A549 (cell line): ENCODE measurements at regions of chr6 and their contacts with region 1.

Region 1: DNA sequence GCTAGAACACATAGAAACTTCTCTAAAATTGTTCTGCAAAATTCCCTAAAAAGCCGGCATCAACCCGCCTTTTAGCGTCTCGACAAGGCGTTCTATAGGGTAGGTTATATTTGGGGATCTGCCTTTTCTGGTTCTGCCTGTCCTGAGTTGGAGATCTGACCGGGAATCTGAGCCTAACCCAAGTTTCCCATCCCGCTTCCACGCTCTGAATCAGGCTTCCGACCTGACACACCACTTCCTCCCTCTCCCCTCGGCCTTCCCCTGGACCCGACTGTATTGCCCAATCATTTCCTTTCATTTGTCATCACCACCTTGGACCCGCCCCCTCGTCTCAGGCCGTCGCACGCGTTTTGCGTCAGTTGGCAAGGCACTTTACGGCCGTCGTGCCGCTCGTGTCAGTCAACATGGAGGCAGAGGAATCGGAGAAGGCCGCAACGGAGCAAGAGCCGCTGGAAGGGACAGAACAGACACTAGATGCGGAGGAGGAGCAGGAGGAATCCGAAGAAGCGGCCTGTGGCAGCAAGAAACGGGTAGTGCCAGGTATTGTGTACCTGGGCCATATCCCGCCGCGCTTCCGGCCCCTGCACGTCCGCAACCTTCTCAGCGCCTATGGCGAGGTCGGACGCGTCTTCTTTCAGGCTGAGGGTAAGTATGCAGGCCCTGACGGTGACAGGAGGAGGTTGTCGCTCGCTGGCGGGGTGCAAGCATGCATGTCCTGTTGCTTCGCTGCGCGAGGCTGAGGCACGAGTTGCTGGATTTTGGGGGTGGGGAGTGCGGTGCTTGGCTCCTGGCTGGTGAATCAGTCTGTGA is at the start of gene ABT1:
- DNase-seq: peak; percentile 88 to 98
- ATAC-seq: peak; percentile 73 to 78
- H3K4me3 ChIP-seq: peak within 1 kb of the TSS; percentile 77
- H3K27ac ChIP-seq: peak within 1 kb of the TSS; percentile 86 to 95
- H3K4me1 ChIP-seq: peaks cover 4% of the 10 kb centered on the region; the same call in 1 of the 3 replicates
- CTCF ChIP-seq: no peak
- EP300 ChIP-seq: no peak
- POLR2A ChIP-seq: peak; percentile 65
- RAD21 ChIP-seq: no peak
- polyA plus RNA-seq, gene ABT1: 10.6 and 11.9 TPM in 2 replicates

Region 2: GRCh38 chr6:25934735-25935306 is 662.0 kb before region 1 on chr6:
- CTCF ChIA-PET with region 1: no interaction called
- POLR2A ChIA-PET with region 1: no interaction called
- DNase-seq: no peak
- ATAC-seq: no peak
- H3K4me3 ChIP-seq: no peak overlapping the region
- H3K27ac ChIP-seq: no peak overlapping the region
- H3K4me1 ChIP-seq: 0 out of 3 replicates have a peak, but pooled peaks cover under 1% of the 10 kb centered on the region
- CTCF ChIP-seq: no peak
- EP300 ChIP-seq: no peak
- POLR2A ChIP-seq: no peak
- RAD21 ChIP-seq: no peak

Region 3: DNA sequence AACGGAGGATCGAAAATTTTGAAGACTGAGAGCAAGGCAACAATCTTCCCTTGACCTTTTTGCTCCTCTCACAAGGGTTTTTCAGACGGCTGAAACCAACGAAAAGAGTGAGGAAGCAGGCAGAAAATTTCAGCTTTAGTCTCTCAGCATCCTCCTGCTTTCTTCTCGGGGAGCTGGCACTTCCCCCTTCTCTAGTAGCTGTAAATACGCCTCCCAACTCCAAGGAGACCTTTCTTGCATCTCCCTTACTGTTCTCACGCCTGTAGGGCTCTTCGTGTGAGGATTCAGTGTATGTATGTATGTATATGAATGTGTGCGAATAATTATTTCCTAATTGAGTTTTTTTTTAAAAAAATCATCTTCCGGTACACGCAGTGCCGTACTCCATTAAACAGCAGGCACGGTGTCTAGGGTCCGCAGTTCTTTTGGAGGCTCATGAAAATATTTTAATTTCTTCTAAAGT is 424.3 kb before region 1 on chr6:
- CTCF ChIA-PET with region 1: interaction called, 10 read pairs
- POLR2A ChIA-PET with region 1: no interaction called
- DNase-seq: no peak
- ATAC-seq: peak; percentile 61 to 64; a peak in 4 of 6 replicates
- H3K4me3 ChIP-seq: peak overlapping the region; percentile 57
- H3K27ac ChIP-seq: peak overlapping the region; percentile 85 to 89
- H3K4me1 ChIP-seq: peaks cover 16% of the 10 kb centered on the region; the same call in 2 of the 3 replicates
- CTCF ChIP-seq: no peak
- EP300 ChIP-seq: no peak
- POLR2A ChIP-seq: no peak
- RAD21 ChIP-seq: no peak

Region 4: GRCh38 chr6:26329763-26330511 is 266.8 kb before region 1 on chr6:
- CTCF ChIA-PET with region 1: interaction called, 19 read pairs
- POLR2A ChIA-PET with region 1: interaction called, 3 read pairs
- DNase-seq: peak in 1 of 2 experiments; percentile 78
- ATAC-seq: peak; percentile 27 to 57; a peak in 4 of 6 replicates
- H3K4me3 ChIP-seq: peak overlapping the region; percentile 69
- H3K27ac ChIP-seq: no peak overlapping the region
- H3K4me1 ChIP-seq: peaks cover 7% of the 10 kb centered on the region; the same call in 1 of the 3 replicates
- CTCF ChIP-seq: no peak
- EP300 ChIP-seq: no peak
- POLR2A ChIP-seq: no peak
- RAD21 ChIP-seq: no peak

Region 5: DNA sequence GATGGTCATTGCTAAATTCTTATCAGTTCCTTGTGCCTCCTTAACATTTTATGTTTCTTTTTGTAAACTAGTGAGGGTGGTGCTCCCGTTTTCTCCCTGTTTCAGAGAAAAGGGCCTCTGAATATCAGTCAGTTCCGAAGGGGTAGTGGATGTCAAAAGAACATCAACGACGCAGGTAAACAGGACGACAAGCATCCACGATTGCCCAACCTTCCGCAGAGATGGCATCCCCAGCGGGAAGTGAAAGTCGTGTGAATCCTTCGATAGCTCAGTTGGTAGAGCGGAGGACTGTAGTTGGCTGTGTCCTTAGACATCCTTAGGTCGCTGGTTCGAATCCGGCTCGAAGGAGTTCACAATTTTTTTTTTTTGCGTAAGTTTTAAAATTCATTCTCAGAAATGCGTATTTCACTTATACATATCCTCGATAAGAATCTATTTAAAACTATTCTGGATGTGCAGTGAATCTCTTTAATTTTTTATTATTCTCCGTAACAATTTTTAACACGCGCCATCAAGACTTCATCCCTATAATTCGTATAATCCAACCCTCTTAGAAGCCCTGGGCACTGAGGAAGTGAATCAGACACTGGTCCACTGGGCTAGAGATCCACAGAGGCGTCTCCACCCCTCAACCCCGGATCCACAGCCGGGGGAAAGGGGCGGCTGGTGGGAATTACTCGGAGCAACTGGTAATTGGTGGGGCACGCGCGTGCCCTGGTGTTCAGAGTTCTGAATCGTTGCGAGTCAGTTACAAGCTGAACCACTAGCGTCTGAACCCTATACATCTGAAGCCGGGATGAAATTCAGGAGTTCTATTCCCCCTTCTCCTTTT is 28.0 kb before region 1 on chr6:
- CTCF ChIA-PET with region 1: interaction called, 124 read pairs
- POLR2A ChIA-PET with region 1: interaction called, 13 read pairs
- DNase-seq: peak in 1 of 2 experiments; percentile 93
- ATAC-seq: peak; percentile 71 to 74
- H3K4me3 ChIP-seq: peak overlapping the region; percentile 66
- H3K27ac ChIP-seq: peak overlapping the region; percentile 53 to 86; a peak in 5 of 6 replicates
- H3K4me1 ChIP-seq: peaks cover 6% of the 10 kb centered on the region; the same call in 1 of the 3 replicates
- CTCF ChIP-seq: peak; percentile 41
- EP300 ChIP-seq: no peak
- POLR2A ChIP-seq: no peak
- RAD21 ChIP-seq: peak; percentile 61 to 68

Region 6: GRCh38 chr6:26581164-26581915 is 15.4 kb before region 1 on chr6:
- CTCF ChIA-PET with region 1: interaction called, 124 read pairs
- POLR2A ChIA-PET with region 1: interaction called, 8 read pairs
- DNase-seq: no peak
- ATAC-seq: no peak
- H3K4me3 ChIP-seq: no peak overlapping the region
- H3K27ac ChIP-seq: no peak overlapping the region
- H3K4me1 ChIP-seq: no peaks in the 10 kb centered on the region
- CTCF ChIP-seq: no peak
- EP300 ChIP-seq: no peak
- POLR2A ChIP-seq: no peak
- RAD21 ChIP-seq: no peak

Region 7: DNA sequence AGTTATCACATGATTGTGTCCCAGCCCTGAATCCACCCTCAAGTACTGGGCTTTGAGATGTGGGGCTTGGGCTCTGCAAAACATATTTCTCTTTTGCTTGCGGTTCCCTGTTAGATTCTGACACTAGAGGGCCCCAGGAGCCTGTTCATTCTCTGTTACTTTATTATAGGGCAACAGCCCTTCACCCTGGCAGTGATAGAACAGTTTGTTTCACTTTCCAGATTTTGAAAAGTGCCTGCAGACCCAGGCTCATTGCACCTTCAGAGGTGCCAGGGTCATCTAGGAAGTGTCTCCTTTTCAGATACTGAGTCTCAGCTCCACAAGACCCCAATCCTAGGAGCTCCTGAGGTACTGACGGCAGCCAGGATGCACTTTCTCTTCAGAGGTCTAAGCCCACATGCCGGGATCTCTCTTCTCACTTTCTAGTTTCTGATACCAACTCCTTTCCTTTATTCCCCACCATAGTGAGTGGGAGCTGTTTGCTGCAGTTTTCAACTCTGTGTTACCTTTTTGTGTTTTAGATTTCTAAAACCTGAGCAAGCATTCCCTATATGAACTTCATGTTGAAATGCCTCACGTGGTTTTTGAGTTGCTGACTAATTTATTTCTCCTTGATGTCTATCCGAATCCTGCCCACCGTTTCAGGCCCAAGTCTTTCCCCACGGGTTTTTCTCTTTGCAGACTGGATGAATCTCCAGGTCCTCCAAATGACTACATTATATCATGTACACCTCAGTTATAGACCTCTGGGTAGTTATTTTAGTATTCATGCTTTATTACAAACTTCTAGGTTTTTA is 10.8 kb after region 1 on chr6:
- CTCF ChIA-PET with region 1: no interaction called
- POLR2A ChIA-PET with region 1: no interaction called
- DNase-seq: peak; percentile 44 to 54
- ATAC-seq: peak; percentile 90 to 96
- H3K4me3 ChIP-seq: peak overlapping the region; percentile 26; the same call in 1 of the 3 replicates
- H3K27ac ChIP-seq: no peak overlapping the region
- H3K4me1 ChIP-seq: no peaks in the 10 kb centered on the region
- CTCF ChIP-seq: peak; percentile 63
- EP300 ChIP-seq: no peak
- POLR2A ChIP-seq: no peak
- RAD21 ChIP-seq: peak; percentile 82 to 87

Region 8: GRCh38 chr6:28068067-28068466 is 1471.3 kb after region 1 on chr6:
- CTCF ChIA-PET with region 1: no interaction called
- POLR2A ChIA-PET with region 1: no interaction called
- DNase-seq: no peak
- ATAC-seq: no peak
- H3K4me3 ChIP-seq: no peak overlapping the region
- H3K27ac ChIP-seq: no peak overlapping the region
- H3K4me1 ChIP-seq: no peaks in the 10 kb centered on the region
- CTCF ChIP-seq: no peak
- EP300 ChIP-seq: no peak
- POLR2A ChIP-seq: no peak
- RAD21 ChIP-seq: no peak